Vagina (tissue), 2 donors: ENCODE measurements at regions of chr10 and their contacts with region 1.

Region 1: GRCh38 chr10:52615756-52616394 is 156.7 kb downstream of the MBL2 start:
- DNase-seq: no peak
- H3K4me3 ChIP-seq: no peak overlapping the region
- H3K27ac ChIP-seq: no peak overlapping the region
- H3K4me1 ChIP-seq: no peaks in the 10 kb centered on the region
- H3K27me3 ChIP-seq: no peaks in the 10 kb centered on the region
- CTCF ChIP-seq: no peak
- POLR2A ChIP-seq: no peak

Region 2: DNA sequence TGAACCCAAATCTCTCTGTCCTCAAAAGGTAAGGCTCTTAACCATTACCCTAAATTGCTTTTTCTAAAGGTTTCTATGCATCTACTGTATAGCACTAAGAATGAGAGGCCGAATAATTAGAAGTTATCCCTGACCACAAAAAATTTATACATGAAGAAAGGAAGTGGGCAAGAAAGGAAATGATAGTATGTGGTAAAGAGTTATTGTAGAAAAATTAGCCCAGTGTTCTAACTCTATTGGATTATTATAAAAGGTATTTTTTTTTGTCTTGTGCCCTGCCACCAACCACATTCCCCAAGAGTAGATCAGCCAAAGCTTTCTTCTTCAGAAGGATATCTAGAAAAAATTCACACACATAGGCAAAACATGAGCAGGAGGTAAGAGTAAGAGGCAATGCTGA is 256.4 kb before region 1 on chr10:
- intact Hi-C with region 1: loop called (anchors 5 kb)
- DNase-seq: no peak
- H3K4me3 ChIP-seq: no peak overlapping the region
- H3K27ac ChIP-seq: no peak overlapping the region
- H3K4me1 ChIP-seq: no peaks in the 10 kb centered on the region
- H3K27me3 ChIP-seq: no peaks in the 10 kb centered on the region
- CTCF ChIP-seq: no peak
- POLR2A ChIP-seq: no peak

Region 3: DNA sequence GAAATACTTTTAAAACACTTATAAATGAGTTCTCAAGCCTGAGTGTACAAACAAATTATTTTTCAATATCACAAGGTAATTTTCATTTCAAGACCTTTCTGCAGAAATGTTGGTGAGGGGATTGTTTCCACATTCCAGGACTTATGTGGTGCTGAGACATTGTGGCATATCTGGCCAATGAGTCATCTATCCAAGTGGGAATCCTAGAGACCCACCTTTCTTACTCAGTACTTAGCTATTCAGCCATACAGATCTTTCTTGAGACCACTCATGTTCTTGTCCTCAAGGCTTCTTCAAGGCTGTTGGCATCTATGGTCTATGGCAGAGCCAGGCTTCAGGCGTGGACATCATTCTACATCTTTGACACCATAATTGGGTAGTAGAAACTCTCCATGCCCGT is 76.4 kb before region 1 on chr10:
- intact Hi-C with region 1: no loop called
- DNase-seq: no peak
- H3K4me3 ChIP-seq: no peak overlapping the region
- H3K27ac ChIP-seq: no peak overlapping the region
- H3K4me1 ChIP-seq: peaks cover 4% of the 10 kb centered on the region
- H3K27me3 ChIP-seq: no peaks in the 10 kb centered on the region
- CTCF ChIP-seq: no peak
- POLR2A ChIP-seq: no peak